CD4-positive, alpha-beta memory T cell (primary cell): ENCODE measurements at regions of chr13 and their contacts with region 1.

Region 1: GRCh38 chr13:26221721-26222519 is at the start of gene RNF6:
- DNase-seq: peak; percentile 88 to 95 (median 91)
- H3K4me3 ChIP-seq: peak within 1 kb of the TSS; percentile 86 to 98
- H3K4me3 Mint-ChIP-seq: peak within 1 kb of the TSS; percentile 95 to 100 (median 100)
- H3K27ac ChIP-seq: peak within 1 kb of the TSS; percentile 94
- H3K27ac Mint-ChIP-seq: peak within 1 kb of the TSS; percentile 92 to 99 (median 99)
- H3K4me1 ChIP-seq: peaks cover 29% of the 10 kb centered on the region
- H3K4me1 Mint-ChIP-seq: peaks cover 28 to 48% (median 41%) of the 10 kb centered on the region in 4 donors
- H3K27me3 ChIP-seq: no peaks in the 10 kb centered on the region
- H3K27me3 Mint-ChIP-seq: peaks cover 0 to 2% of the 10 kb centered on the region in 2 donors
- total RNA-seq, gene RNF6: 46.7 to 47.9 TPM

Region 2: DNA sequence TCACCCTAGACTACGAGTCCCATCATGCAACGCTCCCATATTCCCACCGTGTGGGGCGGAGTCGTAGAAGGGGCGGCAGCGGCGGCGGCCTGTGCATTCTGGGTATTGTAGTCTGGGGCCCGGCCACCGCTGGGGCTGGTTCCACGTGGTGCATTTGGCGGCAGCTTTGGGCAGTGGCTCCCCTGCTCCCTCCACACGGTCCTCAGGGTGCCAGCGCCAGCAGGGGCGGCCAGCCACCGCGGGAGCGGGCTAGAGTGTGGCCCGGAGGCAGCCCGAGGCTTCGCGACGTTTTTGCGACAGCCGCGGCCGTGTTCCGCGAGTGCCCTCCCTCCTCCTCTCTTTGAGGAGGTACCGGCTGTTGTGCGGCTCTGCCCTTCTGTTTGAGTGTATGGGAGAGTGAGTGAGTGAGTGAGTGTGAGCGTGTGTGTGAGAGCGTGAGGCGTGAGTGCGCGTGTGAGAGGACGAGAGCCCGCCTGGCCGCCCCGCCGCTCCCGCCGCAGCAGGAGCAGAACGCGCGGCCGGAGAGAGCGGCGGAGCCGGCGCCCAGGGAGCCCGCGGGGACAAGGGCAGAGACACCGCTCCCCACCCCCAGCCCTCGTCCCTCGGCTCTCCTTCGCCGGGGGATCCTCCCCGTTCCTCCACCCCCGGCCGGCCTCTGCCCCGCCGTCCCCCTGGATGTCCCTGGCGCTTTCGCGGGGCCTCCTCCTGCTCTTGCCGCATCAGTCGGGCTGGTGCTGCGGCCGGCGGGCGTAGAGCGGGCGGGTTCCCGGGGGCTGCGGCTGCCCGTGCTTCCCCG is 32.1 kb after region 1 on chr13 and contains the start of gene CDK8:
- CTCF ChIA-PET with region 1: interaction called, 3 read pairs
- POLR2A ChIA-PET with region 1: interaction called, 49 read pairs
- intact Hi-C with region 1: loop called (anchors 1 kb)
- DNase-seq: peak; percentile 91 to 95 (median 92)
- H3K4me3 ChIP-seq: peak within 1 kb of the TSS; percentile 55 to 87
- H3K4me3 Mint-ChIP-seq: peak within 1 kb of the TSS; percentile 91 to 100 (median 94)
- H3K27ac ChIP-seq: peak within 1 kb of the TSS; percentile 58
- H3K27ac Mint-ChIP-seq: peak within 1 kb of the TSS; percentile 86 to 99 (median 93)
- H3K4me1 ChIP-seq: peaks cover 18% of the 10 kb centered on the region
- H3K4me1 Mint-ChIP-seq: peaks cover 29 to 44% (median 30%) of the 10 kb centered on the region in 4 donors
- H3K27me3 ChIP-seq: no peaks in the 10 kb centered on the region
- H3K27me3 Mint-ChIP-seq: peaks cover 0 to 1% of the 10 kb centered on the region in 2 donors
- total RNA-seq, gene CDK8: 10.4 to 11.7 TPM

Region 3: GRCh38 chr13:26529441-26529840 is 307.5 kb after region 1 on chr13:
- CTCF ChIA-PET with region 1: no interaction called
- POLR2A ChIA-PET with region 1: no interaction called
- intact Hi-C with region 1: no loop called
- DNase-seq: peak in 1 of 5 donors; percentile 2
- H3K4me3 ChIP-seq: no peak overlapping the region
- H3K4me3 Mint-ChIP-seq: no peak overlapping the region
- H3K27ac ChIP-seq: no peak overlapping the region
- H3K27ac Mint-ChIP-seq: no peak overlapping the region
- H3K4me1 ChIP-seq: no peaks in the 10 kb centered on the region
- H3K4me1 Mint-ChIP-seq: no peaks in the 10 kb centered on the region
- H3K27me3 ChIP-seq: no peaks in the 10 kb centered on the region
- H3K27me3 Mint-ChIP-seq: peaks cover 6 to 7% of the 10 kb centered on the region in 2 donors